ENCODE measurements at regions of chr17 and their contacts with region 1.

Region 1: DNA sequence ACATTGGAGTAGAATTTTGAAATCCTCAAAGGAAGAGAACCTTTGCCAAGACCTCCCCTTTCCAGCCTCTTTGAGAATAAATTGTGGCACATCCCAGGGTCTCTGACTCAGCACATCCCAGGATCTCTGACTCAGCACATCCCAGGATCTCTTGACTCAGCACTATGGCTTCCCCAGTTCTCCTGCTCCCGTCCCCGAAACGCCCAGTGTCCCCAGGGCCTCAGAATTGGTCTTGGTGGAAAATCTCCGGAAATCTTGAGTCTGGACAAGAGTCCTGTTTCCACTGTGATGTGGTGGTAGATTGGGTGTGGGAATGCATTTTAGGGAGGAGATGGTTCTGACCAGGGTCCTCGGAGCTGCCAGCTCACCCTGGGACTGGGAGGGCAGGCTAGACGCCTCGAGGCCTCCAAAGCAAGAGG is 19.2 kb downstream of the PLXDC1 start:
- DNase-seq: peak; percentile 36
- ATAC-seq: no peak
- H3K4me3 ChIP-seq: no peak overlapping the region
- H3K27ac ChIP-seq: no peak overlapping the region
- H3K4me1 ChIP-seq: no peaks in the 10 kb centered on the region
- H3K27me3 ChIP-seq: no peaks in the 10 kb centered on the region
- CTCF ChIP-seq: no peak

Region 2: GRCh38 chr17:39199820-39200069 is 67.5 kb after region 1 on chr17:
- CTCF ChIA-PET with region 1: no interaction called
- POLR2A ChIA-PET with region 1: interaction called, 17 read pairs
- intact Hi-C with region 1: no loop called
- DNase-seq: peak; percentile 86
- ATAC-seq: peak; percentile 49
- H3K4me3 ChIP-seq: peak overlapping the region; percentile 93
- H3K27ac ChIP-seq: peak overlapping the region; percentile 94
- H3K4me1 ChIP-seq: peaks cover 24% of the 10 kb centered on the region; the same call in 1 of the 2 replicates
- H3K27me3 ChIP-seq: no peaks in the 10 kb centered on the region
- CTCF ChIP-seq: no peak

Region 3: DNA sequence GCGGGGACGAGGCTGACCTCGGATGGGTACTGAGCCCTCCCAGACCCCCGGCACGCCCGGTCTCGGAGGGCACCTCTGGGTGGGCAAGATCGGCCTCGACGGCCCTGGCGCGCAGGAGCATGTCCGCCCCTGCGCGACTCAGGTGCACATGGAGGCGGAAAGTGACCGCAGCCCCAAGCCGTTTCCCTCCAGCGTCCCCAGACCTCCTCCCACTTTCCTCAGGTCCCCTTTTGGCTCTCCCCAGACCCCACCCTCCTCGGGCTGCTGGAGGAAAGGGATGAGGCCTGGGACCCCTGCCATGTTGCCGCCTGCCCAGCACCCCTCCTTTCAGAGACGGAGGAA is 77.9 kb after region 1 on chr17:
- CTCF ChIA-PET with region 1: no interaction called
- POLR2A ChIA-PET with region 1: no interaction called
- intact Hi-C with region 1: no loop called
- DNase-seq: no peak
- ATAC-seq: no peak
- H3K4me3 ChIP-seq: no peak overlapping the region
- H3K27ac ChIP-seq: no peak overlapping the region
- H3K4me1 ChIP-seq: no peaks in the 10 kb centered on the region
- H3K27me3 ChIP-seq: no peaks in the 10 kb centered on the region
- CTCF ChIP-seq: no peak

Region 4: DNA sequence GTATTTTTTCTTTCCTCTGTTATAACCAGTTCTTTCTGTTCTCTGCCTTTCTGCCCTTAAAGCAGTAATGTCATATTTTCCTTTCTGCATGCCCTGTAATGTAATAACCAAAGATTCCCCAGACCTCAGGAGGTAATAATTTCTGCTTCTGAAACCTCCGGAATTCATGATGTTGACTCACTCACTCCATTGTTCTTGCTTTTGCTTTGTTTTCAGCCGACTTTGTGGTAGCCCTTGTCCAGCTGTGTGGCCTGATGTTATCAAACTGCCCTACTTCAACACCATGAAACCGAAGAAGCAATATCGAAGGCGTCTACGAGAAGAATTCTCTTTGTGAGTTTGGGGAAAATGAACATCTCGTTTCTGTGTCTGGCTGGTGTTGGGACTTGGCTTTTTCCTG is 385.0 kb after region 1 on chr17:
- CTCF ChIA-PET with region 1: no interaction called
- POLR2A ChIA-PET with region 1: no interaction called
- intact Hi-C with region 1: no loop called
- DNase-seq: no peak
- ATAC-seq: no peak
- H3K4me3 ChIP-seq: no peak overlapping the region
- H3K27ac ChIP-seq: no peak overlapping the region
- H3K4me1 ChIP-seq: no peaks in the 10 kb centered on the region
- H3K27me3 ChIP-seq: no peaks in the 10 kb centered on the region
- CTCF ChIP-seq: no peak

Measured in PC-3 (cell line).